ENCODE measurements at regions of chr17 and their contacts with region 1.

Region 1: GRCh38 chr17:75632863-75633485 is at the start of gene SMIM5:
- DNase-seq: peak; percentile 88
- H3K4me3 Mint-ChIP-seq: no peak within 1 kb of the TSS
- H3K27ac Mint-ChIP-seq: no peak within 1 kb of the TSS
- H3K4me1 Mint-ChIP-seq: peaks cover 10% of the 10 kb centered on the region
- H3K27me3 Mint-ChIP-seq: no peaks in the 10 kb centered on the region
- total RNA-seq, gene SMIM5: not detected

Region 2: DNA sequence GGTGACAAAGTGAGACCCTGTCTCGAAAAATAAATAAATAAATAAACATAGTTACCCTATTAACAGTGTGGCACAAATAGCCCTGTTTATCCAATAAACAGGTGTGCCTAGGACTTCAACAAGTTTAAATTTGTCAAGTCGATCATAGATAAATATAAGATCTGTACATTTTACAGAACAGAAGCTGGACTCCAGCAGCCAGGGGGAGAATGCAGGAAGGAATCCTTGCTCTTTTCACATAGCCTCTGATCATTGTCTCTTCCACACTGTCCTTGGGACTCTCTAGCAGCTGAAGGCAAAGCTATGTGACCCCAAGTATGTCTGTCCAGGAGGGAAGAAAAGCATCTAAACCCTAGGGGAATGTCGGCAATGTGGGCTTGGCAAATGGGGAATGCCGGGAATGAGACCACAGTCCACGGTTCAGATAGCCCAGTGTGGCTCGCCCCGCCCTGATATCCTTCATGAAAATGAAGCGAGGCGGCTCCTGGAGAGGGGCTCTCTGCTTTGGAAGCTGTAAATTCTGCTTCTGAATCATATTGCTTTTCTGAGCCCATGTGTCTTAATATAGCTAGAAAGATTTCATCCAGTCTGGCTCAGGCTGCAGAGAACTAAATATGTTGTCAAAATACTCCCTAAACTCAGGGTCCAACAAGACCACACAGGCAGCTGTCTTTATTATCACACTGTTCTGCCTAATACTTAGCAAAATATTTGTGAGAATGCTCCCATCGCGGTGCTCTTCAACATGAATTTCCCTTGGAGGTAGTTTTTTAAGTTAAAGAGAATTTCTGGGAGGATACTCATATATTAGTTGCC is 202.6 kb before region 1 on chr17:
- CTCF ChIA-PET with region 1: interaction called, 13 read pairs
- intact Hi-C with region 1: loop called (anchors 2 kb)
- DNase-seq: no peak
- H3K4me3 Mint-ChIP-seq: no peak overlapping the region
- H3K27ac Mint-ChIP-seq: no peak overlapping the region
- H3K4me1 Mint-ChIP-seq: peaks cover 8% of the 10 kb centered on the region
- H3K27me3 Mint-ChIP-seq: peaks cover 2% of the 10 kb centered on the region

Region 3: GRCh38 chr17:75619506-75620431 is 13.2 kb before region 1 on chr17:
- CTCF ChIA-PET with region 1: interaction called, 20 read pairs
- intact Hi-C with region 1: no loop called
- DNase-seq: peak; percentile 38
- H3K4me3 Mint-ChIP-seq: no peak overlapping the region
- H3K27ac Mint-ChIP-seq: no peak overlapping the region
- H3K4me1 Mint-ChIP-seq: no peaks in the 10 kb centered on the region
- H3K27me3 Mint-ChIP-seq: no peaks in the 10 kb centered on the region

Region 4: DNA sequence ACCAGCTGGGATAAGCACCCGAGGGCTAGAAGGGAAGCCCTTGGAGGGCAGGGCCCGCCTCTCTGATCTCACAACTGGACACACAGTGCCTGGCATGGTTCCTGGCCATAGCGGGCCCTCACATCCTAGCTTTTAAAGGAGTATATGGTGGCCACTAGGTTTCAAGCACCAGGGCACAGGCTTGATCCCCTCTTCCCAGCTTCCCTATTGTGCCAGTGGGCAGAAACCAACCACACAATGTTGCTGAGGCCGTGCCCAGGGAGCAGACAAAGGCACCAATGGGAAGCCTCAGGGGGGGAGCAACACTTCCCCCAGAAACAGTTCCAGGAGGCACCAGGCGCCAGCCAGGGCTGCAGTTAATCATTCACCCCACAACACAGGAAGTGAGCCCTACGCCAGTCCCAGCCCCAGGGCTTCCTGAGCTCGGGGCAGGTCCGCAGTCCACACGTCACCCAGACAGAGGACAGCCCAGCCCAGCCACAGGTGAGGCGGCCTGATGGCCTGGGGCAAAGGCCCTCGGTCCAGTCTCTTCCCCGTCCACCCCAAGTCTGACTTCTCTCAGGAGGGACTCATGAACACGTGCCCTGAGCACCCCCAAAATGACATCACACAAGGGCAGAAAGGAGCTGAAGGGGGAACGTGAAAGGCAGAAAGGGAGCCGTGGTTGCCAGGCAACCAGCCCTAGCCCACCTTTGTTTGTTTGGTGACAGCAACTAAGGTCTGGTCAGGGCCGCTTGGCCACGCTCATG is 13.1 kb after region 1 on chr17:
- CTCF ChIA-PET with region 1: interaction called, 38 read pairs
- intact Hi-C with region 1: no loop called
- DNase-seq: no peak
- H3K4me3 Mint-ChIP-seq: no peak overlapping the region
- H3K27ac Mint-ChIP-seq: no peak overlapping the region
- H3K4me1 Mint-ChIP-seq: peaks cover 4% of the 10 kb centered on the region
- H3K27me3 Mint-ChIP-seq: no peaks in the 10 kb centered on the region

Region 5: GRCh38 chr17:75652915-75653549 is 20.1 kb after region 1 on chr17:
- CTCF ChIA-PET with region 1: interaction called, 38 read pairs
- intact Hi-C with region 1: no loop called
- DNase-seq: peak; percentile 26
- H3K4me3 Mint-ChIP-seq: no peak overlapping the region
- H3K27ac Mint-ChIP-seq: no peak overlapping the region
- H3K4me1 Mint-ChIP-seq: no peaks in the 10 kb centered on the region
- H3K27me3 Mint-ChIP-seq: no peaks in the 10 kb centered on the region

Region 6: GRCh38 chr17:75658237-75658636 is 25.3 kb after region 1 on chr17:
- CTCF ChIA-PET with region 1: interaction called, 38 read pairs
- intact Hi-C with region 1: no loop called
- DNase-seq: no peak
- H3K4me3 Mint-ChIP-seq: no peak overlapping the region
- H3K27ac Mint-ChIP-seq: no peak overlapping the region
- H3K4me1 Mint-ChIP-seq: no peaks in the 10 kb centered on the region
- H3K27me3 Mint-ChIP-seq: no peaks in the 10 kb centered on the region